Spleen (tissue), 13 donors: ENCODE measurements at regions of chr6 and their contacts with region 1.

Region 1: DNA sequence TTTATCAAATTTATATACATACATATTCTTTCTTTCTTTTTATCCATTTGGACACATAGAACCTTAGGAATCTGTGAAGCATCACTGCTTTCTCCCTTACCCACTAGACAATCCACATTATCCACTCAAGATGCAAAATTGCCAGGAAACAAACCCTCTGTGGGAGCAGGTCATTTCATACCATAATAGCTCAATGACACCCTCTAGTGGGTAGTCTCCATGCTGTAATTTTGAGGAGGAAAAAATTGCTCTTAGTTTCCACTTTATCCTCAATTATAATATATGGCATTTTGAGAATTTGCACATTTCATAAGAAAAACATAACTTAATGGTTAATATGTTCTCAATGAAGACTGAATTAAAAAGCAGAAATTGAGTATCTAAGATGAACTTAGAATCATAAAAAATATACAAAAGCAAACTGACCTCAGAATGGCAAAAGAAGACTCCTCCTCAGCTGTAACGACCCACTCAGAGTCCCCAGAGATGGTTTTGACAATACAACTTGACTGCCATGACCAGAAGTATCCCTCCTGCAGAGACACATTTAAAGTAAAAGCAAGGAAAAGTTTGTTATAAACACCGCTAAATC is 164.1 kb downstream of the FRK start:
- DNase-seq: no peak
- H3K4me3 ChIP-seq: no peak overlapping the region
- H3K27ac ChIP-seq: no peak overlapping the region
- H3K4me1 ChIP-seq: no peaks in the 10 kb centered on the region
- H3K27me3 ChIP-seq: no peaks in the 10 kb centered on the region
- CTCF ChIP-seq: peak in 9 of 11 experiments; percentile 12 to 55 (median 50)
- POLR2A ChIP-seq: no peak

Region 2: GRCh38 chr6:114747987-114748630 is 1148.5 kb before region 1 on chr6:
- intact Hi-C with region 1: loop called (anchors 5 kb)
- DNase-seq: no peak
- H3K4me3 ChIP-seq: no peak overlapping the region
- H3K27ac ChIP-seq: no peak overlapping the region
- H3K4me1 ChIP-seq: no peaks in the 10 kb centered on the region
- H3K27me3 ChIP-seq: no peaks in the 10 kb centered on the region
- CTCF ChIP-seq: peak in 6 of 11 experiments; percentile 27 to 59 (median 40)
- POLR2A ChIP-seq: no peak